HEK293T (cell line): ENCODE measurements at regions of chr22 and their contacts with region 1.

Region 1: DNA sequence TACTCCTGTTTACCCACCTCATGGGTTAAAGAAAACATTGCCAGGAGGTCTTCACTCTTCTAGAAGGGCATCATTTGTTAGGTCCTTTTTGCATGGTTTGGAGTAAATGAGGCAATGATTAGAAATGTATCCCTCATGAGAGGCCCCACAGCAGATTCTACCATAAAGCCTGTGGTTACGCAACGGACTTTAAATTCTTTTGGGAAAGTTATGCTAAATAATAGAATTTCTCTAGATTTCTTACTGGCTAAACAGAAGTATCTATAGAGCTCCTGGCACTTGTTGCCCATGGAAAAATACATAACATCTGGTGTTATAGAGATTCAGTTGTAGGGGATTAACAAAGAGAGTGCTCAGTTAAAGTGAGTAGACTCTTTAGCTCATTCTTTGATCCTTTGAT is 15.1 kb upstream of the ATXN10 start:
- DNase-seq: no peak

Region 2: GRCh38 chr22:45597460-45598192 is 59.0 kb before region 1 on chr22:
- CTCF ChIA-PET with region 1: interaction called, 10 read pairs
- POLR2A ChIA-PET with region 1: no interaction called
- DNase-seq: no peak